Naive thymus-derived CD8-positive, alpha-beta T cell (primary cell): ENCODE measurements at regions of chr1 and their contacts with region 1.

Region 1: GRCh38 chr1:227886993-227887696 is 60.6 kb downstream of the WNT9A start:
- DNase-seq: peak in 4 of 10 donors; percentile 34 to 77 (median 38)
- ATAC-seq: peak; percentile 44 to 66
- H3K4me3 Mint-ChIP-seq: peak overlapping the region; percentile 44 to 83 (median 65)
- H3K27ac Mint-ChIP-seq: peak overlapping the region in 9 of 10 donors; percentile 41 to 93 (median 88)
- H3K4me1 Mint-ChIP-seq: peaks cover 21 to 61% (median 39%) of the 10 kb centered on the region in 4 donors
- H3K27me3 Mint-ChIP-seq: no peaks in the 10 kb centered on the region

Region 2: DNA sequence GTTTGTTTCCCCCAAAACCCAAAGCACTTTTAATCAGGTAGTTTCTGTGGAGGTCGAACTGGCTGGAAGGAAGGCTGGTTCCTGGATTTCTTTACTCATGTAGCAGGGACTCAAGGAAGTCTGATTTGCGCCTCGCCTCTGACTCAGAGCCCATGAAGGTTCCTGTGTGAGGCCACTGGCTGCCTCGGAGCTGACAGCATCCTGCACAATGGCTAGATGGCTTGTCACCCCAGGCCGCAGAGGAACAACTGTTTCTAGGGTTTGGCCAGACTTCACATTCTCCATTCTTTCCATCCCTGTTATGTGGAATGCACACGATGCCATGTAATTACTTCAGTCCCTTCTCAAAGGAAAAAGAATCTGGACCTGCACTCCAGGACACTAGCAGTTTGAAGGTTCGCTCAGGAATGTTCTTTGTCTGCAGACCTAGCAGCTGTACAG is 110.8 kb before region 1 on chr1:
- POLR2A ChIA-PET with region 1: interaction called, 15 read pairs
- DNase-seq: no peak
- ATAC-seq: no peak
- H3K4me3 Mint-ChIP-seq: peak overlapping the region in 1 of 10 donors; percentile 22
- H3K27ac Mint-ChIP-seq: peak overlapping the region in 5 of 10 donors; percentile 46 to 66 (median 52)
- H3K4me1 Mint-ChIP-seq: peaks cover 18 to 39% (median 33%) of the 10 kb centered on the region in 4 donors
- H3K27me3 Mint-ChIP-seq: no peaks in the 10 kb centered on the region

Region 3: DNA sequence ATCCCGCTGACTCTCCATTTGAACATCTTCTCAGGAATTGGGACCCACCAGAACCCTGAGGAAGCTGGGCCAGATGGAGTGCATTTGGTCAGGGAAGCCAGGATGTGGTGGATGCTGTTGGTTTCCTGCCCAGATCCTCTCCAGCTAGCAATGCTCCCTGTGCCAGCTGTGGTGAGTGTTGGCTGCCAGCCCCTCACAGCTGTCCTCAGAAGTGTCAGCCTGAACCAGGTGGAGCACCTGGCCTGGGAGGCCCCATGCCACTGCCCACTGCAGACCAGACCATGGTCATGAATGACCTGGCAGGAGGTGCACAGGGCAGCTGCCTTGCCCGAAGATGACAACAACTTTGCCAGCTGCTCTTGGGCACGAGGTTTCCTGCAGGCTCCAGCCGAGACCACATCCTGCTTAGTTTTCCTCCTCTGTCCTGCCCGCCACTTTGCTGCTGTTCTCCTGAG is 17.3 kb before region 1 on chr1:
- POLR2A ChIA-PET with region 1: interaction called, 23 read pairs
- DNase-seq: peak in 3 of 10 donors; percentile 31 to 61 (median 34)
- ATAC-seq: peak; percentile 64 to 81
- H3K4me3 Mint-ChIP-seq: peak overlapping the region; percentile 29 to 88 (median 74)
- H3K27ac Mint-ChIP-seq: peak overlapping the region in 8 of 10 donors; percentile 37 to 82 (median 73)
- H3K4me1 Mint-ChIP-seq: peaks cover 28 to 55% (median 44%) of the 10 kb centered on the region in 4 donors
- H3K27me3 Mint-ChIP-seq: peaks cover 0 to 4% (median 0%) of the 10 kb centered on the region in 5 donors